PC-3 (cell line): ENCODE measurements at regions of chr1 and their contacts with region 1.

Region 1: DNA sequence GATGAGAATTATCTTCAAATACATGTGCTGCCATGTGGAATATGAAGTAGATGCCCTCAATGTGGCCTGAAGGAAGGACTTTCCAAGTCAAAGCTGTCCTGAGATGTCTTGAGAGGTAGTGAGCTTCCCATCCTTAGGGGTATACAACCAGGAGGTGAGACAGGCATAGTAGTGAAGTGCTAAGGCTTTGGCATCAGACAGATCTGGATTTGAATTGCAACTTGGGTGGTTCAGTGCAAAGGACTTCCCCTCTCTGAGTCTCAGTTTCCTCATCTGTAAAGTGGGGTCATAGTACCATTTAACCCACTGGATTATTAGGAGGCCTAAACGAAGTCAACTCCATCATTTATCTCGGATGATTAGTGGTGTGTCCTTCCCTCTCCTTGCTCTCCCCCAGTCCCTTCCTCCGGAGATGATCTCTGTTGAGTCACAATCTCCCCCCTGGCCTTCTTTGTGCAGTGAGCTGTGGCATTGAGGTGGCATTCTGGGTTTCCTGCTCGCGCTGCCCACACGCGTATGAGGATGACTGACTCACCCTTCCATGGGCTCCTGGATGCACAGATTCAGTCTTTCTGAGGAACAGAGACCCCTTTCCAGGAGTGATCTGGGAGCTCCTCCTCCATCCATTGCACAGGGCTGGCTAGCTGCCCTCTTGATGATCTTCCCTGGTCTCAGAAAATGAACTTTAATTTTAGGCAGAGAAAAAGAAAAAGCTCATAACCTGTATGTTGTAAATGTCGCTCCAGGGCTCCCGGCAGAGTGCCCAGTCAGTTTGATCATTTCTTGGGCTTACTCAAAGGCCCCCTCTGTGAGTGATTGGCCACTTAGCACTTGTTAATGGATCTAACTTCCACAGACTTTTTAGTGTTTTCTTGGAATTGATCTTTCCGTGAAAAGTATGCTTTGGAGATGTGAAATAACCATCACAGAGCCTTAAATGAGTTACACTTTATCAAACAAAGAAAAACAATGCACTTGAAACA is 354.6 kb downstream of the PTPRU start:
- DNase-seq: peak; percentile 97
- ATAC-seq: peak; percentile 94
- H3K4me3 ChIP-seq: no peak overlapping the region
- H3K27ac ChIP-seq: peak overlapping the region; percentile 86
- H3K4me1 ChIP-seq: peaks cover 38% of the 10 kb centered on the region
- H3K27me3 ChIP-seq: no peaks in the 10 kb centered on the region
- CTCF ChIP-seq: no peak

Region 2: GRCh38 chr1:29698033-29698432 is 107.2 kb after region 1 on chr1:
- CTCF ChIA-PET with region 1: no interaction called
- POLR2A ChIA-PET with region 1: no interaction called
- intact Hi-C with region 1: loop called (anchors 5 kb)
- DNase-seq: peak; percentile 85
- ATAC-seq: peak; percentile 97
- H3K4me3 ChIP-seq: no peak overlapping the region
- H3K27ac ChIP-seq: no peak overlapping the region
- H3K4me1 ChIP-seq: peaks cover 10% of the 10 kb centered on the region
- H3K27me3 ChIP-seq: no peaks in the 10 kb centered on the region
- CTCF ChIP-seq: peak; percentile 84